A549 (cell line): ENCODE measurements at regions of chr15 and their contacts with region 1.

Region 1: DNA sequence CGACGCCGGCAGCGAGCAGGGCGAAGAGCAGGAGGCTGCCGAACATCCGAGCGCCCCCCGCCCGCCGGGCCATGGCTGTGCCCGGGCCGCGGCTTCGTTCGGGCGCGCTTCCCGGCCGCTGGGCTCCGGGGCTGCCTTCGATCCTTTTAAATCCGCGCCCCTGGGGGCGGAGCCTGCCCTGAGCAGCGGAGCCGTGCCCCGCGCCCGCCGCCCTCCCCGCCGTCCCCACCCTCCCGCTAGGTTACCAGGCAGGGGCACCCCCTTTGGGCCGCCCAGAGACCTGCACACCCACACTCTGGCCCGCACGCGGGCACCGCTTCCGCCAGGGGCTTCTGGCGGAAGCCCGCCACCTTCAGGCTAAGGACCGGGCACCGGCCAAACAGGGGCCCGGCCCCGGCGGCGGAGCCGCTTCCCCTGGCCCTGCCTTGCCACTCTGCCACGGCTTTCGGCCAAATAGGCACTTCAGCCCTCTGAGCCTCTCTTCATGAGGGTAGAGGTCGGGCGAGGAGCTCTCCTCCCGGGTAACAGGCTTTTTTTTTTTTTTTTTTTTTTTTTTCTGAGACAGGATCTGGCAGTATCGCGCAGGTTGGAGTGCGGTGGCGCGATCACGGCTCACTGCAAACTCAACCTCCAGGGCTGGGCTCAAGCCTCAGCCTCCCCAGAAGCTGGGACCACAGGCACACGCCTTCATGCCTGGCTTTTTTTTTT is at the start of gene NMB:
- DNase-seq: peak; percentile 89 to 99
- ATAC-seq: peak; percentile 78 to 85
- H3K4me3 ChIP-seq: peak within 1 kb of the TSS; percentile 47
- H3K27ac ChIP-seq: peak within 1 kb of the TSS; percentile 83 to 88
- H3K4me1 ChIP-seq: peaks cover 29% of the 10 kb centered on the region
- CTCF ChIP-seq: peak; percentile 83
- EP300 ChIP-seq: no peak
- POLR2A ChIP-seq: peak; percentile 26
- RAD21 ChIP-seq: peak; percentile 38 to 73
- polyA plus RNA-seq, gene NMB: 10.1 and 16.1 TPM in 2 replicates

Region 2: GRCh38 chr15:84600851-84601838 is 57.1 kb before region 1 on chr15 and contains the start of gene ZSCAN2:
- CTCF ChIA-PET with region 1: interaction called, 31 read pairs
- POLR2A ChIA-PET with region 1: interaction called, 8 read pairs
- DNase-seq: peak; percentile 95 to 99
- ATAC-seq: peak; percentile 97 to 98
- H3K4me3 ChIP-seq: peak within 1 kb of the TSS; percentile 72
- H3K27ac ChIP-seq: peak within 1 kb of the TSS; percentile 78 to 88
- H3K4me1 ChIP-seq: peaks cover 27% of the 10 kb centered on the region
- CTCF ChIP-seq: no peak
- EP300 ChIP-seq: no peak
- POLR2A ChIP-seq: peak; percentile 36
- RAD21 ChIP-seq: no peak
- polyA plus RNA-seq, gene ZSCAN2: 16.2 and 16.5 TPM in 2 replicates

Region 3: GRCh38 chr15:84671211-84671610 is 13.0 kb after region 1 on chr15:
- CTCF ChIA-PET with region 1: interaction called, 11 read pairs
- POLR2A ChIA-PET with region 1: no interaction called
- DNase-seq: no peak
- ATAC-seq: no peak
- H3K4me3 ChIP-seq: no peak overlapping the region
- H3K27ac ChIP-seq: no peak overlapping the region
- H3K4me1 ChIP-seq: no peaks in the 10 kb centered on the region
- CTCF ChIP-seq: no peak
- EP300 ChIP-seq: no peak
- POLR2A ChIP-seq: no peak
- RAD21 ChIP-seq: no peak

Region 4: GRCh38 chr15:84702961-84703482 is 44.8 kb after region 1 on chr15:
- CTCF ChIA-PET with region 1: interaction called, 23 read pairs
- POLR2A ChIA-PET with region 1: interaction called, 4 read pairs
- DNase-seq: no peak
- ATAC-seq: peak; percentile 23 to 37; a peak in 3 of 6 replicates
- H3K4me3 ChIP-seq: no peak overlapping the region
- H3K27ac ChIP-seq: no peak overlapping the region
- H3K4me1 ChIP-seq: peaks cover 24% of the 10 kb centered on the region
- CTCF ChIP-seq: no peak
- EP300 ChIP-seq: no peak
- POLR2A ChIP-seq: no peak
- RAD21 ChIP-seq: no peak

Region 5: GRCh38 chr15:84734794-84735479 is 76.7 kb after region 1 on chr15:
- CTCF ChIA-PET with region 1: interaction called, 5 read pairs
- POLR2A ChIA-PET with region 1: interaction called, 19 read pairs
- DNase-seq: peak; percentile 88 to 93
- ATAC-seq: peak; percentile 88 to 95
- H3K4me3 ChIP-seq: peak overlapping the region; percentile 7; the same call in 2 of the 3 replicates
- H3K27ac ChIP-seq: peak overlapping the region; percentile 82 to 91
- H3K4me1 ChIP-seq: peaks cover 41% of the 10 kb centered on the region
- CTCF ChIP-seq: no peak
- EP300 ChIP-seq: peak in 1 of 2 experiments; percentile 43; a peak in 2 of 5 replicates
- POLR2A ChIP-seq: peak; percentile 35
- RAD21 ChIP-seq: peak in 1 of 2 experiments; percentile 36; a peak in 2 of 5 replicates

Region 6: GRCh38 chr15:84810073-84810840 is 152.0 kb after region 1 on chr15:
- CTCF ChIA-PET with region 1: no interaction called
- POLR2A ChIA-PET with region 1: no interaction called
- DNase-seq: no peak
- ATAC-seq: peak in 1 of 2 experiments; percentile 18; a peak in 1 of 6 replicates
- H3K4me3 ChIP-seq: no peak overlapping the region
- H3K27ac ChIP-seq: no peak overlapping the region
- H3K4me1 ChIP-seq: no peaks in the 10 kb centered on the region
- CTCF ChIP-seq: no peak
- EP300 ChIP-seq: no peak
- POLR2A ChIP-seq: no peak
- RAD21 ChIP-seq: no peak